H1 (cell line): ENCODE measurements at regions of chr2 and their contacts with region 1.

Region 1: DNA sequence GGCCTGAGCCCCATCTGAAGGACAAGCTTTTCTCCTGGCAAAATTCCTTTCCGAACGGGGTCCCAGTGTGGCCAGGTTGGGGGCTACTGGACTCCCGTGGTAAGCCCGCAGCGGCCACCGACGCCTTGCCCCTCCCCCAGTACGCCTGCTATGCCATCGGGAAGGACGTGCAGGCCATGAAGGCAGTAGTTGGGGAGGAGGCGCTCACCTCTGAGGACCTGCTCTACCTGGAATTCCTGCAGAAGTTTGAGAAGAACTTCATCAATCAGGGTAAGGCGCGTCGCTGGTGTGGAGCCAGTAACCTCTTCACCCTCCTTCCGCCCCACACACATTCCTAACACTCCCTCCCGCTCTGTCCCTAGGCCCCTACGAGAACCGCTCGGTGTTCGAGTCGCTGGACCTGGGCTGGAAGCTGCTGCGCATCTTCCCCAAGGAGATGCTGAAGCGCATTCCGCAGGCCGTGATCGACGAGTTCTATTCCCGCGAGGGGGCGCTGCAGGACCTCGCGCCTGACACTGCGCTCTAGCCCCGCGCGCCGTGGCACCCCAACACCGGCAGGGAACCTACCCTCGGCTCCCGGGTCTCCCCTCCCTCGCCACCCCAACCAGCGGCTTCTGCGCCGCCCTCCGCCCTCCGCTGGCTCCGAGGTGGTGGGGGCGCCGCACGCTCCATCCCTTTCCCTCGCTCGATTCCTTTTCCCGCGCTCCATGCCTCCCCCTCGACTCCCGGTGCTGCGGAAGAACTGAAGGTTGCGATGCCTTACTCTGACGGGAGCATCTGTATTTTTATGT is 13.6 kb upstream of the ANKRD53 start:
- DNase-seq: peak in 1 of 2 experiments; percentile 92
- H3K4me3 ChIP-seq: peak overlapping the region in 3 of 4 experiments; percentile 18 to 64 (median 27); a peak in 7 of 8 replicates
- H3K27ac ChIP-seq: no peak overlapping the region
- H3K4me1 ChIP-seq: no peaks in the 10 kb centered on the region
- H3K27me3 ChIP-seq: peaks cover 10 to 38% (median 28%) of the 10 kb centered on the region in 4 experiments
- CTCF ChIP-seq: peak in 2 of 3 experiments; percentile 84 to 90; a peak in 3 of 4 replicates
- EP300 ChIP-seq: no peak
- POLR2A ChIP-seq: no peak
- RAD21 ChIP-seq: peak; percentile 71 to 75

Region 2: GRCh38 chr2:70861777-70862625 is 102.8 kb before region 1 on chr2:
- CTCF ChIA-PET with region 1: interaction called, 14 read pairs
- POLR2A ChIA-PET with region 1: no interaction called
- DNase-seq: peak in 1 of 2 experiments; percentile 97
- H3K4me3 ChIP-seq: no peak overlapping the region
- H3K27ac ChIP-seq: no peak overlapping the region
- H3K4me1 ChIP-seq: no peaks in the 10 kb centered on the region
- H3K27me3 ChIP-seq: peaks cover 0 to 24% (median 12%) of the 10 kb centered on the region in 4 experiments; a peak in 6 of 7 replicates
- CTCF ChIP-seq: peak; percentile 97 to 99 (median 97)
- EP300 ChIP-seq: no peak; a peak in 1 of 3 replicates
- POLR2A ChIP-seq: no peak
- RAD21 ChIP-seq: peak; percentile 86 to 94

Region 3: DNA sequence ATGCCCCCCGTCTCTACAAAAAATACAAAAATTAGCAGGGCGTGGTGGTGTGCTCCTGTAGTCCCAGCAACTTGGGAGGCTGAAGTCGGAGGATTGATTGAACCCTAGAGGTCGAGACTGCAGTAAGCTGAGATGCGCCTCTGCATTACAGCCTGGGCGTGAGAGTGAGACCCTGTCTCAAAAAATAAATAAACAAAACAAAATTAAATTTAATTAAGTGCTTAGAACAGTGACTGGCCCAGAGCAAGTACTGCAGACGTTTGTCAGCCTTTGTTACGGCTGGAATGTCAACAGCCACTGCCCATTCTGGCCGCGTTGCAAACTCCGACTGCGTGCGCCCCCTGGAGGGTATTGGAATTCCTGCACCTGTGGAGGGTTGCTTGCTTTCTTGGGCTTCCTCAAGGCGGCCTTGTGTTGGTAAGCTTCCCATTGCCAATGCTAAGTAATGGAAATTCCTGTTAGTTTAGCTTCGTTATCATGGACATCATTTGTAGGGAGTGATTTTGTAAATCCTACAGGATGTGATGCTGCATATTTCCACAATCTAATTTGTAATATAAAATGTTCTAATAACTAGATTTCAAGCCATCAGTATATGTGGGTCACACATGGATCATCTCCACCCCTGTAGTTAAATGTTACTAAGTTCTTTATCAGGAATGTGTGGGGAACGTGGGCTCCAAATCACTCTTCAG is 45.0 kb before region 1 on chr2:
- CTCF ChIA-PET with region 1: interaction called, 27 read pairs
- POLR2A ChIA-PET with region 1: interaction called, 3 read pairs
- DNase-seq: peak; percentile 79 to 99
- H3K4me3 ChIP-seq: no peak overlapping the region
- H3K27ac ChIP-seq: no peak overlapping the region
- H3K4me1 ChIP-seq: peaks cover 0 to 8% (median 3%) of the 10 kb centered on the region in 4 experiments; a peak in 4 of 7 replicates
- H3K27me3 ChIP-seq: peaks cover 0 to 4% (median 0%) of the 10 kb centered on the region in 4 experiments; a peak in 1 of 7 replicates
- CTCF ChIP-seq: peak; percentile 91 to 98 (median 96)
- EP300 ChIP-seq: no peak
- POLR2A ChIP-seq: no peak
- RAD21 ChIP-seq: peak; percentile 77 to 82

Region 4: DNA sequence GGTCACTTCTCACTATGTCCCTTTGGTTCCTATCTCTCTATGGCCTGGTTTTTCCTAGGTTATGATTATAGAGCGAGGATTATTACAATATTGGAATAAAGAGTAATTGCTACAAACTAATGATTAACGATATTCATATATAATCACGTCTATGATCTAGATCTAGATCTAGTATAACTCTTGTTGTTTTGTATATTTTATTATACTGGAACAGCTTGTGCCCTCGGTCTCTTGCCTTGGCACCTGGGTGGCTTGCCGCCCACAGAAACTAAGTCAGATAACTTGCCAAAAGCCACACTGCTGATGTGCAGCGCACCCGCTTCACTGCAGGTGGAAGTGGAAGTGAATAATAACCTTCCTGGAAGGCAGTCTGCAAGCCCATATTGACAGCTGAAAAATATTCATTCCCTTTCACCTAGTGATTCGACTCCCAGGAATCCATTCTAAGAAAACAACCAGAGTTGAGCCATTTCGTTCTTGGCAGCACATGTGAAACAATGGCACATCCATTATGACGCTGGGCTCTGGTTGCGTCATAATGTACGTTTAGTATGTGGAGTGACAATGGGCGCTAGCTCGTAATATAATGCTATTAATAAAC is 12.9 kb after region 1 on chr2:
- CTCF ChIA-PET with region 1: interaction called, 66 read pairs
- POLR2A ChIA-PET with region 1: interaction called, 6 read pairs
- DNase-seq: peak in 1 of 2 experiments; percentile 48
- H3K4me3 ChIP-seq: peak overlapping the region in 3 of 4 experiments; percentile 49 to 70 (median 62); a peak in 4 of 8 replicates
- H3K27ac ChIP-seq: no peak overlapping the region
- H3K4me1 ChIP-seq: peaks cover 0 to 14% (median 4%) of the 10 kb centered on the region in 4 experiments; a peak in 6 of 7 replicates
- H3K27me3 ChIP-seq: peaks cover 0 to 27% (median 9%) of the 10 kb centered on the region in 4 experiments; a peak in 5 of 7 replicates
- CTCF ChIP-seq: no peak
- EP300 ChIP-seq: no peak
- POLR2A ChIP-seq: no peak
- RAD21 ChIP-seq: no peak

Region 5: DNA sequence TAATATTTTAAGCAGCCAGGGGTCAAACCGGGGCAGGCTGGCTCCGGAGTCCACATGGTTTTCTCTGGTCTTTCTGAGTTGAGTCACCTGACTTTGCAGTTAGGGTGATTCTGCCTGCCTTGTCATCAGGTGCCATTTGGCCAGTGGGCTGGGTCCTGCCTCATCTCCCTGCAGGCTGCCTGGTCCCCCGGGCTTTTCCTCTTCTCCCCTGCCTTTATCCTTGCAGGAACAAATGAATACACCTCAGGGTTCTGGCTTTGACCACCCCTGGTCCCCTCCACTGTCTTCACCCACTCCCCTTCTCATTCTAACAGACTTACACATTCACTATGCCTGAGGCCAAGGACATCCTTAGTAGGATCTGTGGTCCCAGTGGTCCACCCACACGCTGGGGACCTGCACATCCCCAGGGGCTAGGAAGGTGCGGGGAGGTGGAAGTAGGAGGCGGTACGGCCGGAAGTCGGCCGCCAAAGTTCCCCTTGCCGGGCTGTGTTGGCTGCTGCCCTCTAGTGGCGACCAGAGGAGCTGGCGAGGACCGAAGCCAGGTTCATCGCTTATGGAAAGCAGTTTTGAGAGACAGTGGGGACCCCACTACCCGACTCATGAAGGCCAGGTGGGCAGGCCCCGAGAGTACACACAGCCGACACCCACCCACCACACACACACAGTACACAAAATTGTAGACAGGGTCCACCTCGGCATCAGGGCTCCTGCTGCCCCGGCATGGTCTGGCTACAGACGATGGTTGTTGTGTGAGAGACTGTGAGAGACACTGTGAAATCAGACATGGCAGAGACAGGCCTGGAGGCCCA is 36.2 kb after region 1 on chr2:
- CTCF ChIA-PET with region 1: interaction called, 19 read pairs
- POLR2A ChIA-PET with region 1: no interaction called
- DNase-seq: peak in 1 of 2 experiments; percentile 86
- H3K4me3 ChIP-seq: peak overlapping the region in 2 of 4 experiments; percentile 20 to 46; a peak in 3 of 8 replicates
- H3K27ac ChIP-seq: no peak overlapping the region
- H3K4me1 ChIP-seq: peaks cover 3 to 11% (median 7%) of the 10 kb centered on the region in 4 experiments; a peak in 5 of 7 replicates
- H3K27me3 ChIP-seq: peaks cover 0 to 7% (median 0%) of the 10 kb centered on the region in 4 experiments; a peak in 4 of 7 replicates
- CTCF ChIP-seq: peak; percentile 88 to 94 (median 90)
- EP300 ChIP-seq: no peak
- POLR2A ChIP-seq: no peak
- RAD21 ChIP-seq: peak; percentile 31 to 55; a peak in 3 of 4 replicates

Region 6: GRCh38 chr2:71018625-71019024 is 53.8 kb after region 1 on chr2:
- CTCF ChIA-PET with region 1: no interaction called
- POLR2A ChIA-PET with region 1: no interaction called
- DNase-seq: no peak
- H3K4me3 ChIP-seq: no peak overlapping the region
- H3K27ac ChIP-seq: no peak overlapping the region
- H3K4me1 ChIP-seq: no peaks in the 10 kb centered on the region
- H3K27me3 ChIP-seq: peaks cover 0 to 1% (median 0%) of the 10 kb centered on the region in 4 experiments; a peak in 1 of 7 replicates
- CTCF ChIP-seq: no peak
- EP300 ChIP-seq: no peak
- POLR2A ChIP-seq: no peak
- RAD21 ChIP-seq: no peak

Region 7: GRCh38 chr2:71049365-71050360 is 84.9 kb after region 1 on chr2:
- CTCF ChIA-PET with region 1: no interaction called
- POLR2A ChIA-PET with region 1: no interaction called
- DNase-seq: no peak
- H3K4me3 ChIP-seq: no peak overlapping the region
- H3K27ac ChIP-seq: no peak overlapping the region
- H3K4me1 ChIP-seq: no peaks in the 10 kb centered on the region
- H3K27me3 ChIP-seq: no peaks in the 10 kb centered on the region
- CTCF ChIP-seq: no peak
- EP300 ChIP-seq: no peak
- POLR2A ChIP-seq: no peak
- RAD21 ChIP-seq: peak in 1 of 2 experiments; percentile 11; a peak in 1 of 4 replicates

Region 8: DNA sequence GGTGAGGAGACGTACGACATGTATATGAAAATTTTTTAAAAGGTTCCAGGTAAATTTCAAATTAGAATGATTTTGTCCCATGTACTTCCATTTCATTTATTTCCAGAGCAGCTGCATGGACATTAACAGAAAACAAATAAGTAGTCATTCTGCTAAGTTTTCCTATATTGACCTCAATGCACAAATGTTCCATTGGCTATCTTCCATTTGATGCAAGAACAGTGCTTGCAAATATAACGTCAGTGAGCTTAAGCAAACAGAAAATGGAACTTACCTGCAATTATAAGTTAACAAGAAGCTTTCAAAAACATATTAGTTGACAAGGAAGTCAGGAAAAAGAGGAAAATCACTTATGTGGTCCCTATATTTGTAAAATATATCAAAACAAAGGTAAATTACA is 245.5 kb after region 1 on chr2:
- CTCF ChIA-PET with region 1: no interaction called
- POLR2A ChIA-PET with region 1: no interaction called
- DNase-seq: no peak
- H3K4me3 ChIP-seq: no peak overlapping the region
- H3K27ac ChIP-seq: no peak overlapping the region
- H3K4me1 ChIP-seq: 0 out of 7 replicates have a peak, but pooled peaks cover 0 to 2% (median 0%) of the 10 kb centered on the region in 4 experiments
- H3K27me3 ChIP-seq: no peaks in the 10 kb centered on the region
- CTCF ChIP-seq: no peak
- EP300 ChIP-seq: no peak
- POLR2A ChIP-seq: no peak
- RAD21 ChIP-seq: no peak